Activated T-helper 2 cell treated with anti-CD3 and anti-CD28 coated beads, Interferon-gamma antibody, Interleukin-2, Interleukin-4, amounts not matched to agents 10 μg/mL and 5 μg/mL and 100 μg/mL, durations not matched to agents 14 hours and 24 hours and 36 hours (primary cell): ENCODE measurements at regions of chr10 and their contacts with region 1.

Region 1: DNA sequence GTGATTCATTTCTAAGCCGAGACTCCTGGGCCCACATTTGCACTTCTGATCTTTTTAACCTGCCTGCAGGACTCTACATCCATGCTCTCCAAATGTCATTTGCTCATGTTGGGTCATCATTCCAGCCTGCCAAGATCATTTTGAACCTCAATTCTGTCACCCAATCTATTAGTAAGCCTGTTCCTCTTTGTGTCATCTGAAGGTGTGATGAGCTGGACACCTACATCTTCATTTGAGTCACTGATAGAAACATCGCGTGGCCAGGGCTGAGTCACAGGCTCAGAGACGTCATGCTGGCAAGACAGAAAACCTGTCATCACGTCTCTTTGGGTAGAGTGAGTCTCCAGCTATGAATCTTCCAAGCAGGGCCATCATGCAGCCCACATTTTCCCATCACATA is 65.3 kb upstream of the SLF2 start:
- DNase-seq: no peak
- H3K4me3 Mint-ChIP-seq: no peak overlapping the region
- H3K27ac Mint-ChIP-seq: peak overlapping the region; percentile 56
- H3K4me1 Mint-ChIP-seq: peaks cover 25% of the 10 kb centered on the region
- H3K27me3 Mint-ChIP-seq: peaks cover 36% of the 10 kb centered on the region

Region 2: DNA sequence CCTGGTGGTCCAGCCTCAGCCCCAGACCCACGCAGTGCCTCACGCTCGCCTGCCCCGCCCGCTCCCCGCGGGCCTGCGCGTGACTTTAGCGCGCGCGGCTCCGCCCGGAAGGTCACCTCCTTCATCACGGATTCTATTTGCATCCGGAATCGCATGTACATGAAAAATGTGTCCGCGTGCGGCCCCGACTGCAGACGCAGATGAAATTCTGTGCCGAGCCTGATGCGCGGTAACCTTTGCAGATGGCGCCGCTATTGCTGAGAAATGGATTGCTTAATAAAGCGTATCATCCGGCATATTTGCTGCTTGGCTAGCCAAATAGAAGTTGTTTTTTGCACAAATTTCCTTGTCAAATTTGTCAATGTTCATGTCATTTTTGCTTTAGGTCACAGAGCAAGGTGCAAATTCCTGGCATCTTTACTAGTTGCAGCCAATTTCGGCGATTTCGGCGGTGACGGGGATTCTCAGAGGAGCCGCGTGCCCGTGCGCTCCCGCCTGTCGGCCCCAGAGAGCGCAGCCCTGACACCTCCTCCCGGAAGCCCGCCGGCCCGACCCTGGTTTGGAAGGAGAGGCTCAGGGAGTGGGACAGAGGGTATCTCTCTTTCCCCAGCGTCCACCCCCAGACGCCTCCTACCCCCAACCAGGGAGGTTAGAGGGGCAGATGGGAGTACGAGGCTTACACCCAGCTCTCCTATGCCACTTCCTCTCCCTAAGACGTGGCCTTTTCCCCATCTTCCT is 187.9 kb before region 1 on chr10:
- intact Hi-C with region 1: no loop called
- DNase-seq: no peak
- H3K4me3 Mint-ChIP-seq: no peak overlapping the region
- H3K27ac Mint-ChIP-seq: no peak overlapping the region
- H3K4me1 Mint-ChIP-seq: peaks cover 17% of the 10 kb centered on the region
- H3K27me3 Mint-ChIP-seq: peaks cover 73% of the 10 kb centered on the region

Region 3: GRCh38 chr10:100827819-100828737 is 19.4 kb before region 1 on chr10:
- intact Hi-C with region 1: loop called (anchors 2 kb)
- DNase-seq: no peak
- H3K4me3 Mint-ChIP-seq: peak overlapping the region; percentile 75
- H3K27ac Mint-ChIP-seq: peak overlapping the region; percentile 5
- H3K4me1 Mint-ChIP-seq: peaks cover 21% of the 10 kb centered on the region
- H3K27me3 Mint-ChIP-seq: peaks cover 75% of the 10 kb centered on the region

Region 4: GRCh38 chr10:101161494-101162299 is 314.3 kb after region 1 on chr10:
- intact Hi-C with region 1: no loop called
- DNase-seq: peak; percentile 50
- H3K4me3 Mint-ChIP-seq: no peak overlapping the region
- H3K27ac Mint-ChIP-seq: no peak overlapping the region
- H3K4me1 Mint-ChIP-seq: peaks cover 1% of the 10 kb centered on the region
- H3K27me3 Mint-ChIP-seq: peaks cover 51% of the 10 kb centered on the region